ENCODE measurements at regions of chr13 and their contacts with region 1.

Region 1: DNA sequence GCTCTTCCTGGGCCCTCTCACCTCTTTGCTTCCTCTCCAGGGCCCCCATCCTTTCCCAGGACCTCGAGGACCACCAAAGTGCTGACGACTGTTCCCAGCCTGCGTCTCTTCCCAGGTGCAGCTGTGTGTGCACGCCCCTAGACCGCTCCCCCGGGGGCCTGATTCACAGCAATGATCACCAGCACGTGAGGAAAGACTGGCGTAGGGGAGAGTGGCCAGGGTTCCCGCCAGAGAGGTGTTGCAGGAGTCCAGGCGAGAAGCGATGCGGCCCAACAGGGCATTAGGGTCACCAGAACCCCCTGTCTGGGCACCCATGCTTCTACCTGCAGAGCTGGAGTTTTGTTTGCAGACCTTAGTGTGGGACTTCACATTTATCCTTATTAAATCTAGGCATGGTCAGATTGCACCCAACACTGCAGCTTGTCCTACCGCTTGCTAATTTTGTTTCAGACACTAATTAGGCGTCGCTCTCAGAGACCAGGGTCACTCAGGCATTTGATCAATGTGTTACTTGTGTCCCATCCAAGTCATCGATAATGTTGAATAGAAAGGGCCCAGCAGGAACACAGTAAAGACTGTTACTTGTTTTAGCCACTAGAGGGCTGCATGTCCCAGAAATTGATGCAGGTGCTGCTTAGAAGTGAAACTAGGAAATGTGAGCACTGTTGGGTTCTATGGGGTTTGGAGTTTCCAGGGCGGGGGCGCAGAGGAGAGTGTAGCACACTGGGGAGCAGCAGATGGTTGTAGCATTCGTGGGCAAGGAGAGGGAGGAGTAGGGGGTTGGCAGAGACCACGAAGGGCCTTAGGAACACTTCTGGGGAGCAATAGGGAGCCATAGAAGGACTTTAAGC is 53.2 kb downstream of the CDADC1 start:
- DNase-seq: no peak
- ATAC-seq: peak; percentile 88
- H3K4me3 ChIP-seq: peak overlapping the region; percentile 43
- H3K27ac ChIP-seq: peak overlapping the region; percentile 17
- H3K4me1 ChIP-seq: peaks cover 21% of the 10 kb centered on the region
- H3K27me3 ChIP-seq: no peaks in the 10 kb centered on the region
- CTCF ChIP-seq: peak; percentile 89

Region 2: GRCh38 chr13:49443704-49444523 is 142.9 kb after region 1 on chr13 and contains the starts of genes CAB39L and SETDB2:
- intact Hi-C with region 1: loop called (anchors 10 kb)
- DNase-seq: peak; percentile 100
- ATAC-seq: peak; percentile 99
- H3K4me3 ChIP-seq: peak within 1 kb of the TSS; percentile 82
- H3K27ac ChIP-seq: peak within 1 kb of the TSS; percentile 93
- H3K4me1 ChIP-seq: peaks cover 19% of the 10 kb centered on the region
- H3K27me3 ChIP-seq: no peaks in the 10 kb centered on the region
- CTCF ChIP-seq: peak; percentile 60
- total RNA-seq, gene CAB39L: 18.0 TPM
- total RNA-seq, gene SETDB2: 18.1 TPM

Region 3: DNA sequence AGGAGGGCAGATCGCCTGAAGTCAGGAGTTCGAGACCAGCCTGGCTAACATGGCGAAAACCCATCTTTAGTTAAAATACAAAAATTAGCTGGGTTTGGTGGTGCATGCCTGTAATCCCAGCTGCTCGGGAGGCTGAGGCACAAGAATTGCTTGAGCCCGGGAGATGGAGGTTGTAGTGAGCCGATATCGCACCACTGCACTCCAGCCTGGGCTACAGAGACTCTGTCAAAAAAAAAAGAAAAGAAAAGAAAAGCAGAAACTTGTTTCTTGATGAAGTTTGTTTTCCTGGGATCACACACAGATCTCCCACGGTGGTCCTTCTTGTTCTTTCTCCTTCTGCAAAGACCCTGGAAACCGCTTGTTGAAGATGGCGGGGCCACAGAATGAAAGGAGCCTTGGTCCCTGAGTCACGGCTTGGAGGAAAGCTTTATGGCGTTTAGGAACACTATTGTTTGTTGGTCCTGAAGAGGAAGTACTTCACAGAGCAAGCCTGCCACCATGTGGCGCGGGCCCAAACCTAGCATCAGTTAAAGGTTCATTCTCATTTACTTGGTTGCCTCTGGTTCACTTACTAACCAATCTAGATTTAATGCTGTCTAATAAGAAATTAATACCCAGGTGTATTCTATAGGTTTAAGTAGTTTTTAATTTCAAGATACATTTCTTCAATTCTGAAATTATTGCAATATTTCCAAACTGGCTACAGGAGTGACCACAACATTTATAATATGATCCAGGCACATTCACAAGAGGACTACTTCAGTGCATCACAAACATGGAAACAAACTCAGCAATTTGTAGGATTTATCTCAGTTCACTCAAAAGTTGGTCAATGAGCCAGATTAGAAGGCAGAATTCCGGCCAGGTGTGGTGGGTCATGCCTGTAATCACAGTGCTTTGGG is 306.0 kb after region 1 on chr13:
- intact Hi-C with region 1: loop called (anchors 10 kb)
- DNase-seq: peak; percentile 90
- ATAC-seq: peak; percentile 99
- H3K4me3 ChIP-seq: peak overlapping the region; percentile 40
- H3K27ac ChIP-seq: no peak overlapping the region
- H3K4me1 ChIP-seq: no peaks in the 10 kb centered on the region
- H3K27me3 ChIP-seq: no peaks in the 10 kb centered on the region
- CTCF ChIP-seq: peak; percentile 85

Region 4: GRCh38 chr13:50156140-50156539 is 855.2 kb after region 1 on chr13:
- intact Hi-C with region 1: no loop called
- DNase-seq: no peak
- ATAC-seq: no peak
- H3K4me3 ChIP-seq: no peak overlapping the region
- H3K27ac ChIP-seq: no peak overlapping the region
- H3K4me1 ChIP-seq: no peaks in the 10 kb centered on the region
- H3K27me3 ChIP-seq: no peaks in the 10 kb centered on the region
- CTCF ChIP-seq: no peak

Measured in upper lobe of right lung (tissue), 1 donor.